Adrenal gland (tissue), 19 donors: ENCODE measurements at regions of chr9 and their contacts with region 1.

Region 1: GRCh38 chr9:76810377-76810957 is 46.2 kb downstream of the PCA3 start:
- DNase-seq: peak; percentile 52 to 82 (median 64)
- H3K4me3 ChIP-seq: no peak overlapping the region
- H3K27ac ChIP-seq: no peak overlapping the region
- H3K4me1 ChIP-seq: no peaks in the 10 kb centered on the region
- H3K27me3 ChIP-seq: no peaks in the 10 kb centered on the region
- CTCF ChIP-seq: peak; percentile 67 to 95 (median 91)
- POLR2A ChIP-seq: no peak

Region 2: DNA sequence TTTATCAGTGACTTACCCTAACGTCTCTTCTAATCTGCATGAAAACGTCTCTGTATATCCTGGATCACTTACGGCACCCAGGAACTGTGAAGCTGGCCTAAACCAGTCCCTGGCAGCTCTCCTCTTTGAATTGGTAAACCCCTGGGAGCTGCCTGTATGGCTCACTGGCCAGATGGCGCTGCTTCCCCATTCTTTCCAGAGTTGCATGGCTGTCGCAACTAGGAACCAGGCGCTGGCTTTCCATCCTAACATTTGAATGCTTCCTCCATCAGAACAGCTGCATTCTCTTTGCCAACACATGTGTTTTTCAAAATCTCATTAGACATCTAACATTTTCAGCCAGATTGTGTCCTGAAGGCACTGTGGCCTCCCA is 54.2 kb before region 1 on chr9:
- intact Hi-C with region 1: no loop called
- DNase-seq: peak in 3 of 7 donors; percentile 15 to 19 (median 15)
- H3K4me3 ChIP-seq: no peak overlapping the region
- H3K27ac ChIP-seq: no peak overlapping the region
- H3K4me1 ChIP-seq: no peaks in the 10 kb centered on the region
- H3K27me3 ChIP-seq: no peaks in the 10 kb centered on the region
- CTCF ChIP-seq: no peak
- POLR2A ChIP-seq: no peak

Region 3: DNA sequence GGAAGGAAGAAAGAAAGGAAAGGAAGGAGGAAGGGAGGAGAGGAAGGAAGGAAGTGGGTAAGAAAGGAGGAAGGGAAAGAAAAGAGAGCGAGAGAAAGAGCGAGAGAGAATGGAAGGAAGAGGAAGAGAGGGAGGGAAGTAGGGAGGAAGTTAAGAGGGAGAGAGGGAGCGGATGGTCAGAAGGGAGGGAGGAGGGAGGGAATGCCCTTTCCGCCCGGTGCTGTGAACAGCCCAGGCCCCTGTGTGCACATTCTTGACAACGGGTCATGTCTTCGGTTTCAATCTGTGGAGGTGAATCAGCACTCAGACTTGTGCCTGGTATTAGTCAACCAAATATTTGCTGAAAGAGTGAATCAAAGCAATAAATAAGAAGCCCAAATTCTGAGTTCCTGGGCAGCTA is 56.2 kb after region 1 on chr9:
- intact Hi-C with region 1: no loop called
- DNase-seq: no peak
- H3K4me3 ChIP-seq: no peak overlapping the region
- H3K27ac ChIP-seq: no peak overlapping the region
- H3K4me1 ChIP-seq: no peaks in the 10 kb centered on the region
- H3K27me3 ChIP-seq: no peaks in the 10 kb centered on the region
- CTCF ChIP-seq: no peak
- POLR2A ChIP-seq: no peak

Region 4: GRCh38 chr9:76987594-76988200 is 177.2 kb after region 1 on chr9:
- intact Hi-C with region 1: loop called (anchors 5 to 10 kb)
- DNase-seq: peak; percentile 20 to 80 (median 38)
- H3K4me3 ChIP-seq: no peak overlapping the region
- H3K27ac ChIP-seq: no peak overlapping the region
- H3K4me1 ChIP-seq: no peaks in the 10 kb centered on the region
- H3K27me3 ChIP-seq: peaks cover 6% of the 10 kb centered on the region
- CTCF ChIP-seq: peak; percentile 27 to 66 (median 54)
- POLR2A ChIP-seq: no peak

Region 5: GRCh38 chr9:77000330-77000729 is 189.9 kb after region 1 on chr9:
- intact Hi-C with region 1: no loop called
- DNase-seq: no peak
- H3K4me3 ChIP-seq: no peak overlapping the region
- H3K27ac ChIP-seq: no peak overlapping the region
- H3K4me1 ChIP-seq: no peaks in the 10 kb centered on the region
- H3K27me3 ChIP-seq: no peaks in the 10 kb centered on the region
- CTCF ChIP-seq: no peak
- POLR2A ChIP-seq: no peak

Region 6: GRCh38 chr9:77142366-77142765 is 331.9 kb after region 1 on chr9:
- intact Hi-C with region 1: loop called in 1 of 2 experiments (anchors 10 kb)
- DNase-seq: no peak
- H3K4me3 ChIP-seq: no peak overlapping the region
- H3K27ac ChIP-seq: no peak overlapping the region
- H3K4me1 ChIP-seq: no peaks in the 10 kb centered on the region
- H3K27me3 ChIP-seq: no peaks in the 10 kb centered on the region
- CTCF ChIP-seq: no peak
- POLR2A ChIP-seq: no peak